ENCODE measurements at regions of chr2 and their contacts with region 1.

Region 1: GRCh38 chr2:118221666-118222594 is 133.7 kb downstream of the INSIG2 start:
- DNase-seq: no peak
- ATAC-seq: peak; percentile 61
- H3K4me3 Mint-ChIP-seq: no peak overlapping the region
- H3K27ac Mint-ChIP-seq: no peak overlapping the region
- H3K4me1 Mint-ChIP-seq: peaks cover 30% of the 10 kb centered on the region
- H3K27me3 Mint-ChIP-seq: peaks cover 42% of the 10 kb centered on the region
- CTCF ChIP-seq: peak; percentile 74

Region 2: GRCh38 chr2:117814417-117815264 is 407.3 kb before region 1 on chr2 and contains the start of gene DDX18:
- CTCF ChIA-PET with region 1: no interaction called
- POLR2A ChIA-PET with region 1: no interaction called
- intact Hi-C with region 1: loop called (anchors 10 kb)
- DNase-seq: peak; percentile 92
- ATAC-seq: peak; percentile 88
- H3K4me3 Mint-ChIP-seq: peak within 1 kb of the TSS; percentile 97
- H3K27ac Mint-ChIP-seq: peak within 1 kb of the TSS; percentile 99
- H3K4me1 Mint-ChIP-seq: peaks cover 51% of the 10 kb centered on the region
- H3K27me3 Mint-ChIP-seq: no peaks in the 10 kb centered on the region
- CTCF ChIP-seq: peak; percentile 82
- total RNA-seq, gene DDX18: 98.9 and 109 TPM in 2 replicates

Region 3: DNA sequence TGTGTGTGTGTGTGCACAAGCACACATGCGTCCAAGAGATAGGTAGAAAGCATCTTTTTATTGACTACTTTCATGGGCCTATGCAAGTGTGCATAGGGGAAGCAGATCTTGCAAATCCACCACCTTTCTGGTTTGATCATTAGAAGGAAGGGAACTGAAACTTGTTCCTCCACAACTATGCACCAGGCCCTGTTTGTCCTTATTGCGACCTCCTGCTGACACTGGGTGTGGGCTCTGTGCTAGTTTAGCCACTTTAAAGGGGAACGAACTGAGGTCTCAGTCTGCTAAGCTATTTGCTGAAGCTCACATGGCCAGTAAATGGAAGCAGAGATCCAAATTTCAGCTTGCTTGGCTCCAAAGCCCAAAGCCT is 165.8 kb before region 1 on chr2:
- CTCF ChIA-PET with region 1: no interaction called
- POLR2A ChIA-PET with region 1: interaction called, 4 read pairs
- intact Hi-C with region 1: loop called (anchors 2 kb)
- DNase-seq: peak; percentile 34
- ATAC-seq: peak; percentile 89
- H3K4me3 Mint-ChIP-seq: peak overlapping the region; percentile 66
- H3K27ac Mint-ChIP-seq: peak overlapping the region; percentile 90
- H3K4me1 Mint-ChIP-seq: peaks cover 63% of the 10 kb centered on the region
- H3K27me3 Mint-ChIP-seq: no peaks in the 10 kb centered on the region
- CTCF ChIP-seq: no peak

Region 4: DNA sequence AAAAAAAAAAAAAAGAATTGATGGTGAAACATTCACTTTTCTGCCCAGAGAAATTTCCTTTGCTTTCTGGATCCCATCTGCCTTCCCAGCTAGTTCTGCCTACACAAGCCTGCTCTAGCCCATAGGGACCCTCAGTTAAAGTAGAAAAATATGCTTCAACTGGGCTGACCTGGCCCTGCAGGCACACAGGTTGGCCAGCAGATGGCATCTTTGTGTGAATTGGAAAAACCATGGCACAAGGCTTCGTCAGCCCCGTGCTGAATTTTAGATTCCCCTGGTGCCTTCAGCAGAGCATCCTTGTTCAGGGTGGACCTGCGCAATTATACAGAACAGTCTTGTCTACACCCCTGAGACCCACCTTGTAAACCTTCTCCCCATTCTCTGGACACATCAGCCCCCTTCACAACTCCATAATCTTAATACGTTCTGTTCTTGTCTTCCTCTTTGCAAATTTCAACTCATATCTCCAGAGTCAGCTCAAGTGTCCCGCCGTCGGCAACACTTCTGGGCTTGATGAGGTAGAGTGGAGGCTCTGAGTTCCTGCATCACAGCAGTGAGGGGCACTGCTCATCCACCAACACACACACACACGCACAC is 19.1 kb before region 1 on chr2:
- CTCF ChIA-PET with region 1: interaction called, 4 read pairs
- POLR2A ChIA-PET with region 1: no interaction called
- intact Hi-C with region 1: loop called (anchors 1 kb)
- DNase-seq: peak; percentile 19
- ATAC-seq: peak; percentile 88
- H3K4me3 Mint-ChIP-seq: no peak overlapping the region
- H3K27ac Mint-ChIP-seq: no peak overlapping the region
- H3K4me1 Mint-ChIP-seq: peaks cover 5% of the 10 kb centered on the region
- H3K27me3 Mint-ChIP-seq: peaks cover 20% of the 10 kb centered on the region
- CTCF ChIP-seq: peak; percentile 72

Region 5: DNA sequence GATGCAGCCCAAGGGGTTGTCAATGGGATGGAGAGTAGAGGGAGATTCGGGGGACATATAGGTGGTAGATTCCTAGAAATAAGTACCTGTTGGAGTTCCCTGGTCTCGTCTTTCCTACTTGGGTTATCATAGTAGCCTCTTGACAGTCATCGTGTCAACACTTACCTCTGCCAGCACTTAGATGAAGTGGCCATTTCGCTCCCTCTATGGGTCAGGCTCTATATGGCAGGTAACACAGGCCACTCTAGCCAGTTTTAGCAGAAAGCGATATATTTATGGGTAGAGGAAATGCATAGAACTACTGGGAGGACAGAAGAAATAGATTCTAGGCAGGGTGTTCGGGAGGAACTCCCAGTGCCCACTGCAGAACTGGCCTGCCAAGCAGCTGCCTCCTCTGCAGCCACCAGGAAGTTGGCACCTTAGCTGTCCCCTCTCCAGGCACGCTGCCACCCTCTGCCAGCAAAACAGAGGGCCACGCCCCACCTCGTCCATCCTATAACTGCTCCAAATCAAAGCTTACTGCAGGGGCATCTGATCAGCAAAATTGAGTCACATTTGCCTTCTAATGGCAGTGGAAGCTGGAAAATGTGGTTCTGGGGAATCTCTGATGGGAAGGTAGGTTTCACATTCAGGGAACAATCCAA is 47.6 kb after region 1 on chr2:
- CTCF ChIA-PET with region 1: no interaction called
- POLR2A ChIA-PET with region 1: no interaction called
- intact Hi-C with region 1: no loop called
- DNase-seq: no peak
- ATAC-seq: no peak
- H3K4me3 Mint-ChIP-seq: no peak overlapping the region
- H3K27ac Mint-ChIP-seq: no peak overlapping the region
- H3K4me1 Mint-ChIP-seq: no peaks in the 10 kb centered on the region
- H3K27me3 Mint-ChIP-seq: peaks cover 2% of the 10 kb centered on the region
- CTCF ChIP-seq: no peak

Region 6: GRCh38 chr2:118443596-118443995 is 221.7 kb after region 1 on chr2:
- CTCF ChIA-PET with region 1: no interaction called
- POLR2A ChIA-PET with region 1: no interaction called
- intact Hi-C with region 1: no loop called
- DNase-seq: no peak
- ATAC-seq: no peak
- H3K4me3 Mint-ChIP-seq: no peak overlapping the region
- H3K27ac Mint-ChIP-seq: no peak overlapping the region
- H3K4me1 Mint-ChIP-seq: no peaks in the 10 kb centered on the region
- H3K27me3 Mint-ChIP-seq: peaks cover 2% of the 10 kb centered on the region
- CTCF ChIP-seq: no peak

Region 7: DNA sequence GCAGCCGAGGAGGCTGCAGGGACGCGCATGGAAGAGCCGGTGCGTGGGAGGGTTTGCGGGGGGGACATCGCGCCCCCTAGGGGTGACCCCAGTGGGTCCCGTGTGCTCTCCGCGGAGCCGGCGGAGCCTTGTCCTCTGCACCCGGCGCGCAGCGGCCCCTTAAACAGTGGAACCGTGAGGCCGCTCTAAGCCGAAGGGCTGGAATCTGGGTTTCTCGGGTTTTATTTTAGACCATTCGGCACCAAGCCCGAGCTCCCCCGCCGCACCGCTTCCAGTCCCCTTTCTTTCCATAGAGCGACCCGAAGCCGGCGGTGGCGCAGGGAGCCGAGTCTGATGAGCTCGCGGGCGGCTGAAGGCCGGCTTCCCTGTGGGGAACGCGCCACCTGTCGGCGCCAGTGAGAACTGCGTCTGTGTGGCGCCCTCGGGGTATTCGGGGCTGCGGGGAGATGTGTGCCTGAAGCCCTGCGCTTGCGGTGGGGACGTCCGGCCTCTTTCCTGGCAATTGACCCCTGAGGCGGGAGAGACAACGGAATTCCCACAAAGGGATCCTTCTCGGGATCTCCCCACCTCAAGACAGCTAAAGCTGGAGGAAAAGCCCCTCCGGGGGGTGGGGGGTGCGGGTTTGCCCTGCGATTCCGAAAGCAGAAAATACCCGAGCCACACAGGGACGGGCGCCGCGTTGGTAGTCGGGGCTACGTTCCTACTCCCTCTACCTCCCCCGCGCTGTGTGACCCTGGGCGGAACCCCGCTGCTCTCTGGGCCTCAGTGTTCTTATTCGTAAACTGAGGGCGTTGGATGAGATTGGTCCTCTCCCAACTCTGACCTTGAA is 633.7 kb after region 1 on chr2:
- CTCF ChIA-PET with region 1: interaction called, 41 read pairs
- POLR2A ChIA-PET with region 1: interaction called, 6 read pairs
- intact Hi-C with region 1: loop called (anchors 1 kb)
- DNase-seq: peak; percentile 77
- ATAC-seq: peak; percentile 90
- H3K4me3 Mint-ChIP-seq: peak overlapping the region; percentile 61
- H3K27ac Mint-ChIP-seq: peak overlapping the region; percentile 30
- H3K4me1 Mint-ChIP-seq: peaks cover 23% of the 10 kb centered on the region
- H3K27me3 Mint-ChIP-seq: peaks cover 65% of the 10 kb centered on the region
- CTCF ChIP-seq: peak; percentile 90

Region 8: DNA sequence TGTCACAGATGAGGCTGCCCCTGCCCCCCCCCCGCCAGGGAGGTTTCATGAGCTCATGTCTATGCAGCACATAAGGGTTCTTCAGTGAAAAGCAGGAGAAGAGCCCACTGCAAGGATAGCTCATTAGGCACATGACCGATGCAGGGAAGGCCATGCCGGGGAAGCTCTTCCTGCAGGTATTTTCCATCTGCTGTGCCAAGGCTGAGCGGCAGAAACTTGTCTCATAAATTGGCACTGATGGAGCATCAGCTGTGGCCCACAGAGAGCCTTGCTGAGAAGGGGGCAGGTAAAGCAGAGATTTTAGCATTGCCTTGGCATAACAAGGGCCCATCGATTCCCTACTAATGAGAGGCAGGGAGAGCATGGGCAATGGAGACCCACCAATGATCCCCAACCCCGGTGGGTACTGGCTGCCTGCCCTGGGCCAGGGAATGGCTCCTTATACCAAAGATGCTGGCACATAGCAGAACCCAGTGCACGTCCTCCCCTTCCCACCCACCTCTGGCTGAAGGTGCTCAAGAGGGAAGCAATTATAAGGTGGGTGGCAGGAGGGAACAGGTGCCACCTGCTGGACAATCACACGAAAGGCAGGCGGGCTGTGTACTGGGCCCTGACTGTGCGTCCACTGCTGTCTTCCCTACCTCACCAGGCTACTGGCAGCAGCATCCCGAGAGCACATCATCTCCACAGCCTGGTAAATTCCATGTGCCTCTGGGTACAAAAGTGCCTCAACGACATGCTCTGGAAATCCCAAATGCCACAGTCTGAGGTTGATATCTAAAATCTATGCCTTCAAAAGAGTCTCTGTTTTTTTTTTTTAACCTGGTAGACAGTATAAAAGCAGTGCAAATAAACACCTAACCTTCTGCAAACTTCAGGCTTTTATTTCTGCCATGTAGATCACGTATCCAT is 1043.1 kb after region 1 on chr2:
- CTCF ChIA-PET with region 1: no interaction called
- POLR2A ChIA-PET with region 1: no interaction called
- intact Hi-C with region 1: loop called (anchors 1 kb)
- DNase-seq: no peak
- ATAC-seq: peak; percentile 56
- H3K4me3 Mint-ChIP-seq: no peak overlapping the region
- H3K27ac Mint-ChIP-seq: no peak overlapping the region
- H3K4me1 Mint-ChIP-seq: no peaks in the 10 kb centered on the region
- H3K27me3 Mint-ChIP-seq: peaks cover 2% of the 10 kb centered on the region
- CTCF ChIP-seq: no peak

Region 9: DNA sequence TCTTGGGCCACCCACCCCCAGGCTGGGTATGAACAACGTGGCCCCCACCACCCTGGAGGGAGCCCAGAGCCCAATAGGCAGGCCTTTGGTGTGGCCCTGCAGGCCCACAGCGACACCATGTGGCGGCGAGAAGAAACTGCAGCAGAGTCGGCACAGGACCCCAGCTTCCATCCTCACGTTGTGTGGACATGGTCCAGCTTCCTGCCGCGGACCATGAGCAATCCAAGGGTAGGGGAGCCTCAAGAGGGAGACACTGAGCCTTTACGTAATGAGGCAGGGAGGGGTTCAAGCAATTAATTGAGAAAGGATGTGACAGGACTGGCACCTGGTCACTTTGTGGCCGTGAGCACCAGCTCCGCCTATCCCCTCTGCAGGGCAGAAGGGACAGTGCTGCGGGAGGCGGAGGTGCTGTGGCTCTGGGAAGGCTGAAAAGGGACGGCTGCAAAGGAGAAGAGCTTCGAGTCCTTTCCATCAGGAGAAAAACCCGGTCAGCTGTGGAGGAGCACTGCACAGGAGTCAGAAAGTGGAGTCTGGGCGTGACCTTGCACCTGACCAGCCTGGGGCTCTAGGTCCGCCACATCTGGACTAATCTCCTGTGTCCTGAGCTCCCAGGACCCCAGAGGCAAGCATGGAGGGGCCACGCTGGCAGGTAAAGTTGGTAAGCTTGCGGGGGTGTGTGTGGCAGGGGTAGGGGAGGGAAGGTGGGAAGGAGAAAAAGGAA is 1254.5 kb after region 1 on chr2:
- CTCF ChIA-PET with region 1: no interaction called
- POLR2A ChIA-PET with region 1: no interaction called
- intact Hi-C with region 1: loop called (anchors 2 kb)
- DNase-seq: peak; percentile 37
- ATAC-seq: peak; percentile 78
- H3K4me3 Mint-ChIP-seq: no peak overlapping the region
- H3K27ac Mint-ChIP-seq: no peak overlapping the region
- H3K4me1 Mint-ChIP-seq: no peaks in the 10 kb centered on the region
- H3K27me3 Mint-ChIP-seq: peaks cover 5% of the 10 kb centered on the region
- CTCF ChIP-seq: peak; percentile 49

Measured in activated B cell treated with CpG ODN at 0.5 μM for 24 hours (primary cell).